Tibial artery (tissue), 4 donors: ENCODE measurements at regions of chr10 and their contacts with region 1.

Region 1: DNA sequence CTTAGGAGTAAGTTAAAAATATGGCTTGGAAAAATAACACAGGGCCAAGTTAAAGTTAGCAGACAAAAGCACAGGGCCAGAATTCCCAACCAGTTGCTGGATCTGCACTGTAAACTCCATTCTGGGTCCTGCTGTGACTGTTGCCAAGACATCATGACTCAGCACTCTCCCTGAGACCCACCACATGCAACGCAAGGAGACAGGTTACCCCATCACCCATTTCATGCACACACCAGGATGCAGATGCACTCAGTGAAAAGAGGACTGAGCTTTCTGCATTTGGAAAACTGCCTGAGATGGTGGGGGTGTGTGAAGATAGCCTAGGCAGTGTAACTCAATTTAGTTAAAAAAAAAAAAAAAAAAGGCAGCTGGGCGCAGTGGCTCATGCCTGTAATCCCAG is 97.6 kb upstream of the ZNF438 start:
- DNase-seq: peak; percentile 62 to 82
- H3K4me3 ChIP-seq: no peak overlapping the region
- H3K27ac ChIP-seq: peak overlapping the region; percentile 64 to 68
- H3K4me1 ChIP-seq: peaks cover 0 to 32% (median 13%) of the 10 kb centered on the region in 4 donors
- H3K27me3 ChIP-seq: no peaks in the 10 kb centered on the region
- CTCF ChIP-seq: no peak

Region 2: GRCh38 chr10:31075434-31075833 is 53.8 kb before region 1 on chr10:
- intact Hi-C with region 1: loop called (anchors 10 kb)
- DNase-seq: no peak
- H3K4me3 ChIP-seq: no peak overlapping the region
- H3K27ac ChIP-seq: peak overlapping the region; percentile 5 to 15
- H3K4me1 ChIP-seq: peaks cover 0 to 54% (median 25%) of the 10 kb centered on the region in 4 donors
- H3K27me3 ChIP-seq: no peaks in the 10 kb centered on the region
- CTCF ChIP-seq: no peak